ENCODE measurements at regions of chr1 and their contacts with region 1.

Region 1: DNA sequence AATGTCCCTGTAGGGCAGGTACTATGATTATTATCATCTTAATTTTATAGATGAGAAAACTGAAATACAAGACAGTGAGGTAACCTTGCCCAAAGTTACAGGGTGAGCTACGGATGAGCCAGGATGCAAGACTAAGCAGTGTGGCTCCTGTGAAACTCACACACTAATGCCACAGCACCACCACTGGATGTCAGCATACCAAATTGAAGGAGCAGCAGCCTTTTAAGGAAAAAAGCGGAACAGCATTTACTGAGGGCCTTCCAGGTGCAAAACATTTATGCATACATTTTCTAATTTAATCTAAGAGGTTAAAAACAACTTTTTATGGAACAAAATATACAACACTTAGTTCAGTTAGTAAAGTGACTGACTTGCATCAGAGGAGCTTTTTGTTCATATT is 41.7 kb downstream of the SEC16B start:
- DNase-seq: no peak
- ATAC-seq: no peak

Region 2: DNA sequence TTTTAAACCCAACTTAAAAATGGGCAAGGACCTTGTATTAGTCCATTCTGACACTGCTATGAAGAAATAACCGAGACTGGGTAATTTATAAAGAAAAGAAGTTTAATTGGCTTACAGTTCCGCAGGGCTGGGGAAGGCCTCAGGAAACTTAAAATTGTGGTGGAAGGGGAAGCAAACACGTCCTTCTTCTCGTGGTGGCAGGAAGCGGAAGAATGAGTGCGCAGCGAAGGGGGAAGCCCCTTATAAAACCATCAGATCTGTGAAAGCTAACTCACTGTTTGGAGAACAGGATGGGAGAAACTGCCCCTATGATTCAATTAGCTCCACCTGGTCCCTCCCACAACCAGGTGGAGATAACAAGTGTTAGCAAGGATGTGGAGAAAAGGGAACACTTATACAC is 196.0 kb before region 1 on chr1:
- intact Hi-C with region 1: no loop called
- DNase-seq: no peak
- ATAC-seq: no peak

Region 3: DNA sequence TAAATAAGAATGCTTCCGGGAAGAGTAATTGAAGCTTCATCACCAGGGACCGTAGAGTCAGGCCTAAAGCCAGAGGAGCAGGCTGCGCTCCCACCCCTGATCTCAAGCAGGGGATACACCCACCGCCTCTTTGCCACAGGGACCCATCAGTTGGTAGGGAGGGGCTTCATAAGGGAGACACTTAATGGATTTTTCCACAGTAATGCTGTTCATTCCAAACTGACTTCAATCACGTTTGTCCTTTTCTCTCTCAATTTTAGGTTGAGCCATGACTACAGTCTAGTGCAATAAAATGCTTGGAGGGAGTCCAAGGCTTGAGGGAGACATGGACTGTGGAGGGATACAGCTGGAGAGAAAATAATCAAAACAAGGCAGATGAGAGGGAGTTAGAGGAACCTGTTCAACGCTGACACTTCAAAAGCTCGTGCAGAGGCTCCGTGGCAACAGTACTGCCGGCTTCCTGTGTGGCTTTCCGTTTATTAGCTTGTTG is 69.8 kb before region 1 on chr1:
- intact Hi-C with region 1: loop called (anchors 10 kb)
- DNase-seq: no peak
- ATAC-seq: no peak

Measured in Right ventricle myocardium inferior (tissue), 1 donor.